ENCODE measurements at regions of chr19 and their contacts with region 1.

Region 1: GRCh38 chr19:2475702-2476450 is at the start of gene GADD45B:
- DNase-seq: peak; percentile 94
- ATAC-seq: peak; percentile 54
- H3K4me3 ChIP-seq: peak within 1 kb of the TSS; percentile 100
- H3K27ac ChIP-seq: peak within 1 kb of the TSS; percentile 95
- H3K4me1 ChIP-seq: peaks cover 12% of the 10 kb centered on the region
- H3K27me3 ChIP-seq: no peaks in the 10 kb centered on the region
- CTCF ChIP-seq: no peak
- EP300 ChIP-seq: peak in 1 of 2 experiments; percentile 17; a peak in 1 of 4 replicates
- POLR2A ChIP-seq: peak; percentile 100
- RAD21 ChIP-seq: no peak; the same call in 1 of the 2 replicates
- polyA plus RNA-seq, gene GADD45B: 2.4 to 10.5 TPM

Region 2: DNA sequence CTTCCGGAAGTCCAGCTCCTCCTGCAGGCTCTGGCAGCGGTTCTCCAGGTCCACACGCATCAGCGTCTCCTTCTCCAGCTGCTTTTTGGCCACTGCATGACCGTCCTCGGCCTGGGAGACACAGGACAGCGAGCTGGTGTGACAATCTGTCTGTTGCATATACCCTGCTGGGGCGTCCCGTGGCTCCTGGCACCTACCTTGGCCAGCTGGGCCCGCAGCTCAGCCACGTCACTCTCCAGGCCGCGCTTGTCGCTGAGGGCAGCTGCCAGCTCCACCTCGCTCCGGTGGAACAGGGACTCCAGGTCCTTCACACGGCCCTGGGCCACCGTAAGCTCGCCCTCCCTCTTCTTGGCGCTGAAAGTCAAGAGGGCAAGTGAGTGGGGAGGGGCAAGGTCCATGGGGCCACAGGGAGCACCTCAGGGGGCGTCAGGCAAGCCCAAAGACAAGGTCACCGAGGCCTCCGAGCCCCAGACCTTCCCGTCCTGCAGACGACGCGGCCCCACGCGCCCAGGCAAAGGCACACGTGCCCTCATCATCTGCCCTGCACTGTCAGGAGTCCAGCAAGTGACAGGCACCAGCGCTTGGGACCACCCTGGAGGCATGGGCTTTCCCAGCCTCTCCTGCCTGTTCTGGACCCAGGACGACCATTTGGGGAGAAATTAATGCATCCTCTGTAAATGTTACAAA is 37.6 kb before region 1 on chr19:
- CTCF ChIA-PET with region 1: no interaction called
- POLR2A ChIA-PET with region 1: no interaction called
- RAD21 ChIA-PET with region 1: no interaction called
- SMC1A ChIA-PET with region 1: no interaction called
- in situ Hi-C with region 1: no loop called
- intact Hi-C with region 1: no loop called
- DNase-seq: no peak
- ATAC-seq: no peak
- H3K4me3 ChIP-seq: no peak overlapping the region
- H3K27ac ChIP-seq: no peak overlapping the region
- H3K4me1 ChIP-seq: no peaks in the 10 kb centered on the region
- H3K27me3 ChIP-seq: no peaks in the 10 kb centered on the region
- CTCF ChIP-seq: no peak
- EP300 ChIP-seq: no peak
- POLR2A ChIP-seq: peak; percentile 30
- RAD21 ChIP-seq: no peak

Region 3: GRCh38 chr19:2543463-2544442 is 67.9 kb after region 1 on chr19:
- CTCF ChIA-PET with region 1: interaction called, 6 read pairs
- POLR2A ChIA-PET with region 1: interaction called, 15 read pairs
- RAD21 ChIA-PET with region 1: interaction called, 41 read pairs
- SMC1A ChIA-PET with region 1: interaction called, 20 read pairs
- in situ Hi-C with region 1: no loop called
- intact Hi-C with region 1: no loop called
- DNase-seq: no peak
- ATAC-seq: peak; percentile 82
- H3K4me3 ChIP-seq: peak overlapping the region; percentile 53
- H3K27ac ChIP-seq: peak overlapping the region; percentile 64
- H3K4me1 ChIP-seq: peaks cover 35% of the 10 kb centered on the region
- H3K27me3 ChIP-seq: no peaks in the 10 kb centered on the region
- CTCF ChIP-seq: peak in 1 of 3 experiments; percentile 18; a peak in 1 of 6 replicates
- EP300 ChIP-seq: no peak
- POLR2A ChIP-seq: peak; percentile 41; the same call in 1 of the 2 replicates
- RAD21 ChIP-seq: 0 out of 2 replicates have a peak, but pooled peaks have one; percentile 3

Region 4: GRCh38 chr19:2561895-2562294 is 86.0 kb after region 1 on chr19:
- CTCF ChIA-PET with region 1: interaction called, 12 read pairs
- POLR2A ChIA-PET with region 1: interaction called, 21 read pairs
- RAD21 ChIA-PET with region 1: interaction called, 67 read pairs
- SMC1A ChIA-PET with region 1: interaction called, 21 read pairs
- in situ Hi-C with region 1: no loop called
- intact Hi-C with region 1: loop called (anchors 1 kb)
- DNase-seq: peak; percentile 92
- ATAC-seq: peak; percentile 89
- H3K4me3 ChIP-seq: peak overlapping the region; percentile 61
- H3K27ac ChIP-seq: peak overlapping the region; percentile 98
- H3K4me1 ChIP-seq: peaks cover 28% of the 10 kb centered on the region
- H3K27me3 ChIP-seq: no peaks in the 10 kb centered on the region
- CTCF ChIP-seq: no peak
- EP300 ChIP-seq: peak; percentile 87
- POLR2A ChIP-seq: peak; percentile 65; the same call in 1 of the 2 replicates
- RAD21 ChIP-seq: peak; percentile 31; the same call in 1 of the 2 replicates

Region 5: GRCh38 chr19:2594319-2594718 is 118.4 kb after region 1 on chr19:
- CTCF ChIA-PET with region 1: interaction called, 10 read pairs
- POLR2A ChIA-PET with region 1: interaction called, 86 read pairs
- RAD21 ChIA-PET with region 1: interaction called, 104 read pairs
- SMC1A ChIA-PET with region 1: interaction called, 18 read pairs
- in situ Hi-C with region 1: no loop called
- intact Hi-C with region 1: no loop called
- DNase-seq: peak; percentile 60
- ATAC-seq: peak; percentile 4; the same call in 1 of the 3 replicates
- H3K4me3 ChIP-seq: no peak overlapping the region
- H3K27ac ChIP-seq: peak overlapping the region; percentile 49
- H3K4me1 ChIP-seq: peaks cover 23% of the 10 kb centered on the region
- H3K27me3 ChIP-seq: no peaks in the 10 kb centered on the region
- CTCF ChIP-seq: no peak
- EP300 ChIP-seq: peak; percentile 53 to 66; a peak in 2 of 4 replicates
- POLR2A ChIP-seq: no peak
- RAD21 ChIP-seq: no peak

Region 6: GRCh38 chr19:2618611-2619010 is 142.7 kb after region 1 on chr19:
- CTCF ChIA-PET with region 1: interaction called, 113 read pairs
- POLR2A ChIA-PET with region 1: interaction called, 166 read pairs
- RAD21 ChIA-PET with region 1: interaction called, 28 read pairs
- SMC1A ChIA-PET with region 1: interaction called, 143 read pairs
- in situ Hi-C with region 1: loop called (anchors 5 kb)
- intact Hi-C with region 1: no loop called
- DNase-seq: no peak
- ATAC-seq: no peak
- H3K4me3 ChIP-seq: no peak overlapping the region
- H3K27ac ChIP-seq: peak overlapping the region; percentile 68
- H3K4me1 ChIP-seq: peaks cover 62% of the 10 kb centered on the region
- H3K27me3 ChIP-seq: no peaks in the 10 kb centered on the region
- CTCF ChIP-seq: no peak
- EP300 ChIP-seq: 0 out of 4 replicates have a peak, but pooled peaks of 1 of the 2 experiments have one; percentile 24
- POLR2A ChIP-seq: no peak
- RAD21 ChIP-seq: no peak

Region 7: DNA sequence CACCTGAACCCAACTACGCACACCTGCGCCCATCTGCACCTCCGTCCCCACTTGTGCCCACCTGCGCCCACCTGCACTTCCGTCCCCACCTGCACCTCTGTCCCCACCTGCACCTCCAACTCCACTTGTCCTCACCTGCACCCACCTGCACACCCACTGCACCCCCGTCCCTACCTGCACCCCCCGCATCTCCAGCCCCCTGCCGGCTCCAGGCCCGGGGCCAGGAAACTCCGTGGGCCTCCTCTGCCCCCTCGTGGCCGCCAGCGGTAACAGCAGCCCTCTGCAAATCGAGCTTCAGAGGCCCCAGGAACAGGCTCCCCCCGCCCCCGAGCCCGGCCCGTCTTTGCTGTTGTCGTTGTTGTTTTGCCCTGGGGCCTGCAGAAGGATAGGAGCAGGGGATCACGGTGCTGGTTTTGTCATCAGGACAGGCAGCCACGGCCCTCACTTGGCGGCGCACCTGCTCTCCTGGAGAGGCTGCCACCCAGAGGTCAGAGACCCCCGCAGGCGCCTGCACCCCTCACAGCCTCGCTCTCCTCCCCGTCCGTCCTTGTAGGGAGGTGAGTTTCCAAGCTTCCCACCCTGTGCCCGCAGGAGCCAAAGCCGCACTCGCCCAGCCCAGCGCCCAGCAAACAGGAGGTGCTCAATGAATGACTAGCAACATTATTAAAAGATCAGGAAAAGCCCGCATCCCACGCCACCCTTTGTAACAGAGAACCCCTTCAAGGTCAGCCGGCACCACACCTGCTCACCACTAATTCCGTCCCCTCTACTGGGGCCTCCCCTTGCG is 161.2 kb after region 1 on chr19:
- CTCF ChIA-PET with region 1: interaction called, 24 read pairs
- POLR2A ChIA-PET with region 1: interaction called, 7 read pairs
- RAD21 ChIA-PET with region 1: interaction called, 22 read pairs
- SMC1A ChIA-PET with region 1: interaction called, 9 read pairs
- in situ Hi-C with region 1: no loop called
- intact Hi-C with region 1: no loop called
- DNase-seq: no peak
- ATAC-seq: peak; percentile 83
- H3K4me3 ChIP-seq: no peak overlapping the region
- H3K27ac ChIP-seq: no peak overlapping the region
- H3K4me1 ChIP-seq: peaks cover 26% of the 10 kb centered on the region
- H3K27me3 ChIP-seq: no peaks in the 10 kb centered on the region
- CTCF ChIP-seq: peak; percentile 82 to 97 (median 88)
- EP300 ChIP-seq: no peak
- POLR2A ChIP-seq: no peak; the same call in 1 of the 2 replicates
- RAD21 ChIP-seq: peak; percentile 95

Region 8: GRCh38 chr19:2950286-2951124 is 474.6 kb after region 1 on chr19:
- CTCF ChIA-PET with region 1: no interaction called
- POLR2A ChIA-PET with region 1: no interaction called
- RAD21 ChIA-PET with region 1: no interaction called
- SMC1A ChIA-PET with region 1: no interaction called
- in situ Hi-C with region 1: no loop called
- intact Hi-C with region 1: no loop called
- DNase-seq: peak; percentile 99
- ATAC-seq: peak; percentile 99
- H3K4me3 ChIP-seq: peak overlapping the region; percentile 83
- H3K27ac ChIP-seq: peak overlapping the region; percentile 85
- H3K4me1 ChIP-seq: peaks cover 3% of the 10 kb centered on the region
- H3K27me3 ChIP-seq: no peaks in the 10 kb centered on the region
- CTCF ChIP-seq: no peak
- EP300 ChIP-seq: no peak
- POLR2A ChIP-seq: peak; percentile 97
- RAD21 ChIP-seq: no peak